ENCODE measurements at regions of chr6 and their contacts with region 1.

Region 1: DNA sequence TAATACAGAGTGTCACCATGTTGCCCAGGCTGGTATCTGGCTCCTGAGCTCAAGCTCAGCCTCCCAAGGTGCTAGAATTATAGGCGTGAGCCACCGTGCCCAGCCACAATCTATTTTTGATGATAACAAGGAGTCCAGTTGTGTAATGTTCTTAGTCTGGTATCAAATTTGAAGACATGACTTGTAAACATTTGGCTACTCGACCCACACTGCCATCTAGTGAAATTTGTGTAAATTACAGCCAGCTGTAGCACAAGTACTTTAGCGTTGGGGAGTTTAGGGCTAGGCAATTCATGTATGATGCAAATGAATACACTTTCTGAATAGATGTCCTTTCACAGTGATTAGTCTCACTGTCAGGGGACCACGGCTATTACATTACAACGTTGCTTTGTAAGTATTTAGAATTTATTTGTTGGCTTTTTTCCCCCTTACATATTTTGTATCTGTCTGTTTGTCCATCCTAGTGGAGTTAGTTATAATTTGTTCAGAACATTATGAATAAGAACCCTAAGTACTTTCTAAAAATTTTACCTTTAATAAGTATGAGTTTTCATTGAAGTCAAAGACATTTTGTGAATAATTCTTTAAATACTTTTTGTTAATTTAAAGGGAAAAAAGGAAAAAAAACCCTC is 139.7 kb downstream of the PRDM13 start:
- DNase-seq: no peak
- ATAC-seq: peak; percentile 56

Region 2: DNA sequence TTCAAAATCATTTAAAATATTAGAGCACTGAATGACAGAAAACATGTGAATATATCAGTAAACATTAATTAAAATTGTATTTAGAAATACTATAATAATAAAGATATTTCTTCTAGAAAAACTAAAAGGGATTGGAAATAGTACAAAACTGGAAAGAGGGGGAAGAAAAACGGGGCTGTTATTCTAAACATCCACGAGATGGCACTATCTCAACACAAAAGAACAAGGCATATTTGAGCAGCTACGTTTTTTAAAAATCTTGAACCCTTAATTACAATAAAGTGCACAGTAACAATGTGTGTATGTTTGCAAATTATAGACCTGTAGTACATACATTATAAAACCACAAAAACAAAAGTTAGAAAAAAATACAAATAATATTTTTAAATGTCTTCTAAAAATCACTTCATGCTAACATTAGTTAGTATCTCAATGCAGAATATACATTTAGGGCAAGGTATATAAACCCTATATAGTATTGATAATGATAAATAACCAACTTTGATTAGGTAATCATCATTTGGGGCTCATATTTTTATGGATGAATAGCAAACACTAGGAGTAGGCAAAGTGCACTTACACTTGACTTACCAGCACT is 278.8 kb before region 1 on chr6:
- intact Hi-C with region 1: loop called (anchors 1 kb)
- DNase-seq: no peak
- ATAC-seq: no peak

Region 3: DNA sequence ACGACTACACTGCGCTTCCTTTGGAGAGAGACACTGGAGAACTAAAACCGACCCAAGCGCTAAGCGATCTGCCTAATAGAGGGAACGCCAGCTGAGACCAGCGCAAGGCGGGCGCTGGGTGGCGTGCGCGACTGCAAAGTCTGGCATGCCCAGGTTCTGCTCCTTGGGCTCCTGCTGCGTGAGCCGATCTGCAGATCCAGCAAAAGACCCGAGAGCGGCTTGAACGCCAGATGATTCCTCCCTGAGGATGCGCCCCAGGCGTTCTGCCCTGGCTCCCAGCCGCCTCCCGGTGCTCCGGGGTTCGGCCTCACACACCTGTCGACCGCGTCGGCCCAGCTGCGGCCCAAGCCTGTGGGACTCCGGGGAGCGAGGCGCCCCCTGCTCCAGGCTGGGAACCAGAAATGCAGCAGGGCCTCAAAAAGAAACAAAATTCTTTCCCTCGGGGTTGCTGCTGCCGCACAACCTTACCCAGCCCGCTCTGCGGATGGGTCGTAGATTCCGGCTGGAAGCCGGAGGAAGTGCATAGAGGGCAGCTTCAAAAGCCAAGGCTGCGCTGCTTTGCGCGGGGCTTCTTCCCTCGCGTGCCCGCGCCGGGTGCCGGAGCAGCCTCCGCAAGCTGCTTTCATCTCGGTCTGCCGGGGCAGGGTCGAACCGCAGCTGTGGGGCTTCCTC is 157.6 kb before region 1 on chr6:
- intact Hi-C with region 1: loop called (anchors 2 kb)
- DNase-seq: no peak
- ATAC-seq: peak; percentile 87